CD4-positive, alpha-beta memory T cell (primary cell): ENCODE measurements at regions of chr11 and their contacts with region 1.

Region 1: DNA sequence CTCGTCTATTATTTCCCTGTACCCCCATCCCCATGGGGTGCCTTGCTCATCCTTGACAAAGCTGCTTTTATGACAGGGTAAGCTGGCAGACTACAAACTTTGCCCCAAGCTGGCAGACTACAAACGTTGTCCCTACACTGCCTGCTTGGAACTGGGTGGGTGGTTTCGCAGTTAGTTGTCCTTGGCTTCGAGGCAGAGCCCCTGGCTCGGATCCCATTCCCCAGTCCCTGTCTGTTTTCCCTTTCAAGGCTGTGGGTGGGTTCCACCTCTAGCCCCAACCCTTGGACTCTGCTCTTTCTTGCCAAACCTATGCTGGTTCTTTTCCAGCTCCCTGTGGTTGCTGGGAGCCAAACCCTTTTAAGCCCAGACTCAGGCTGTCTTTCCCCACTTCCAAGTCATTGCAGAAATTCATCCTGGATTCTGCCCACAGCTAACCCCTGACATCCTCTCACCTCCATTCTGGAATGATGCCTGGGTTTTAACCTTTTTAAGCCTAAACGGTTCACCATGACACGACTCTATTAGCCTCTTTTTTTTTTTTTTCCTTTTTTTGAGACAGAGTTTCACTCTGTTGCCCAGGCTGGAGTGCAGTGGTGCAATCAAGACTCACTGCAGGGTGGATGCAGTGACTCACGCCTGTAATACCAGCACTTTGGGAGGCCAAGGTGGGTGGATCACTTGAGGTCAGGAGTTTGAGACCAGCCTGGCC is 9.2 kb upstream of the RBM14 start:
- DNase-seq: no peak
- H3K4me3 ChIP-seq: no peak overlapping the region
- H3K4me3 Mint-ChIP-seq: no peak overlapping the region
- H3K27ac ChIP-seq: no peak overlapping the region
- H3K27ac Mint-ChIP-seq: peak overlapping the region in 1 of 7 donors; percentile 83
- H3K4me1 ChIP-seq: peaks cover 11% of the 10 kb centered on the region
- H3K4me1 Mint-ChIP-seq: peaks cover 6 to 13% (median 11%) of the 10 kb centered on the region in 4 donors
- H3K27me3 ChIP-seq: no peaks in the 10 kb centered on the region
- H3K27me3 Mint-ChIP-seq: no peaks in the 10 kb centered on the region

Region 2: DNA sequence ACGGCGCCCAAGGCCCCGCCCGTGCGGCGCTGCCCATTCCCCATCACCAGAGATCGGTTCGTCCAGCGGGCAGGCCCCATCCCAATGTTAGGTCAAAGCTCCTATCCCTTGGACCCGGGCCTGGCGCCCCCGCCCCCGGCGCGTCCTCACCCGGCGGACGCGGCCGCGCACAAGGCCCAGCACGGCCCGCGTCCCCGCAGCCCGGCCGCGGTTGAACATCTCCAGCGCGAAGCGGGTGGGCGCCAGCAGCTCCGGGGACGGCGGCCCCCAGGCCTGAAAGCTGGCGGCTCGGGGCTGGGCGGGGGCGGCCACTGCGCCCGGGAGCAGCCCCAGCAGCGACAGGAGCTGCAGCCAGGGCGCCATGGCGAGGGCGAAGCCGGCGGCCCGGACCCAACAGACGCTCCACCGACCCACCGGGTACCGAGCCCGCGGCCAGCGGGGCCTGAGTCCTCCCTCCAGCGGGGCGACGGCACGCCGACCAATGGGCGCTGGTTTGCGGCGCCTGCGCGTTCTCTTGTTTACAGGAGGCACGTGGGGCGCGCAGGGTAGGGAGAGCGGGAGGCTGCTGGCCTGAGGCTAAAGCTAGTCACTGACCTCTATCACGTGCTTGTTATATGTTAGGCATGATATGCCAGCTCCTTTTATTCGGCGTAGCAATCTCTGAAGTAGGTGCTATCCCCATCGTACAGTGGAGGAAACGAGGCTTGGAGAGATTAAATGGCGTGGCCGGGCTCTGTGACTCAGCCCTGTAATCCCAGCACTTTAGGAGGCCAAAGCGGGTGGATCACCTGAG is 39.0 kb before region 1 on chr11 and contains the start of gene CTSF:
- CTCF ChIA-PET with region 1: no interaction called
- POLR2A ChIA-PET with region 1: no interaction called
- intact Hi-C with region 1: no loop called
- DNase-seq: peak; percentile 49 to 72 (median 56)
- H3K4me3 ChIP-seq: peak within 1 kb of the TSS in 1 of 2 donors; percentile 50
- H3K4me3 Mint-ChIP-seq: peak within 1 kb of the TSS; percentile 73 to 87 (median 82)
- H3K27ac ChIP-seq: peak within 1 kb of the TSS; percentile 25
- H3K27ac Mint-ChIP-seq: peak within 1 kb of the TSS in 4 of 7 donors; percentile 48 to 85 (median 68)
- H3K4me1 ChIP-seq: peaks cover 7% of the 10 kb centered on the region
- H3K4me1 Mint-ChIP-seq: peaks cover 2 to 13% (median 6%) of the 10 kb centered on the region in 4 donors
- H3K27me3 ChIP-seq: no peaks in the 10 kb centered on the region
- H3K27me3 Mint-ChIP-seq: peaks cover 0 to 6% of the 10 kb centered on the region in 2 donors
- total RNA-seq, gene CTSF: 28.1 to 31.7 TPM

Region 3: GRCh38 chr11:66670816-66671215 is 63.5 kb after region 1 on chr11:
- CTCF ChIA-PET with region 1: no interaction called
- POLR2A ChIA-PET with region 1: no interaction called
- intact Hi-C with region 1: loop called (anchors 1 kb)
- DNase-seq: no peak
- H3K4me3 ChIP-seq: no peak overlapping the region
- H3K4me3 Mint-ChIP-seq: no peak overlapping the region
- H3K27ac ChIP-seq: no peak overlapping the region
- H3K27ac Mint-ChIP-seq: peak overlapping the region; percentile 24 to 79 (median 64)
- H3K4me1 ChIP-seq: peaks cover 20% of the 10 kb centered on the region
- H3K4me1 Mint-ChIP-seq: peaks cover 25 to 63% (median 31%) of the 10 kb centered on the region in 4 donors
- H3K27me3 ChIP-seq: no peaks in the 10 kb centered on the region
- H3K27me3 Mint-ChIP-seq: no peaks in the 10 kb centered on the region